ENCODE measurements at regions of chr11 and their contacts with region 1.

Region 1: GRCh38 chr11:10526974-10527918 is 13.7 kb downstream of the RNF141 start:
- DNase-seq: peak; percentile 66
- ATAC-seq: peak; percentile 59
- H3K4me3 ChIP-seq: no peak overlapping the region
- H3K27ac ChIP-seq: peak overlapping the region; percentile 89
- H3K4me1 ChIP-seq: peaks cover 16% of the 10 kb centered on the region
- H3K27me3 ChIP-seq: no peaks in the 10 kb centered on the region
- CTCF ChIP-seq: no peak
- POLR2A ChIP-seq: no peak
- RAD21 ChIP-seq: no peak

Region 2: GRCh38 chr11:10322830-10323792 is 204.1 kb before region 1 on chr11:
- CTCF ChIA-PET with region 1: no interaction called
- POLR2A ChIA-PET with region 1: no interaction called
- dilution Hi-C with region 1: no loop called
- in situ Hi-C with region 1: no loop called
- intact Hi-C with region 1: loop called (anchors 10 kb)
- DNase-seq: peak; percentile 93
- ATAC-seq: peak; percentile 50
- H3K4me3 ChIP-seq: no peak overlapping the region
- H3K27ac ChIP-seq: peak overlapping the region; percentile 48; the same call in 1 of the 2 replicates
- H3K4me1 ChIP-seq: peaks cover 38% of the 10 kb centered on the region
- H3K27me3 ChIP-seq: no peaks in the 10 kb centered on the region
- CTCF ChIP-seq: peak; percentile 68
- POLR2A ChIP-seq: no peak
- RAD21 ChIP-seq: peak; percentile 67

Region 3: DNA sequence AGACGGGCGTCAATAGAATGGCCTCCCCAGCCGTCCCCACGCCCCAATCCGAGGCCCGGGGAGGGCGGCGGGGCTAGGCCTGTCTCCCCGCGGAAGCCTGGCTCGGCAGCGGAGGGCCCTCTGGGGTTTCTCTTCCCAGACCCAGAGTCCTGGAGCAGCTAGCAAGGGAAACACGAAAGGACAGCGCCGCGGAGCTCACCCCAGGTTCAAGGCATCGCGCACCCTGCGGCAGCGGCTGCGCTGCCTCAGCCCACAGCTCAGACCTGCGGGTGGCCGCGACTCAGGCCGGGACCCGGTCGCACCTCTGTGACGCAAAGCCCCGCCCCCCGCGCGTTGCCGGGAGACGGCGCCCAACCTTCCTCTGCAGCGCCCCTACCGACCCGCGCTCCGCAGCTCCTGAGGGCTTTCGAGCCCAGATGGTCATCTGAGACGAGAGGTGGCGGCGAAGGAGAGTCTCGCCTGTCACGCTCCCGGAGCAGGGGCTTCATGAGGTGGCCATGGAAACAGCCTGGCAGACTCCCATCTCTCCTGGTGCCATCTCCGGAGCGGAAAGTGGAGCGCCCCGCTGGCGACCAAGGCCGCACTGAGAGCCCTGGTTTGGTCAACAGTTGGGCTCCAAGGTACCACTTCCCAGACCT is 13.8 kb after region 1 on chr11 and contains the start of gene RNF141:
- CTCF ChIA-PET with region 1: interaction called, 5 read pairs
- POLR2A ChIA-PET with region 1: no interaction called
- dilution Hi-C with region 1: no loop called
- in situ Hi-C with region 1: no loop called
- intact Hi-C with region 1: loop called (anchors 1 kb)
- DNase-seq: peak; percentile 87
- ATAC-seq: peak; percentile 99
- H3K4me3 ChIP-seq: peak within 1 kb of the TSS; percentile 77
- H3K27ac ChIP-seq: peak within 1 kb of the TSS; percentile 79
- H3K4me1 ChIP-seq: peaks cover 2% of the 10 kb centered on the region
- H3K27me3 ChIP-seq: no peaks in the 10 kb centered on the region
- CTCF ChIP-seq: peak; percentile 86
- POLR2A ChIP-seq: peak; percentile 92
- RAD21 ChIP-seq: peak; percentile 49
- total RNA-seq, gene RNF141: 18.6 and 34.2 TPM in 2 replicates

Region 4: GRCh38 chr11:10606536-10607208 is 79.4 kb after region 1 on chr11:
- CTCF ChIA-PET with region 1: no interaction called
- POLR2A ChIA-PET with region 1: no interaction called
- dilution Hi-C with region 1: no loop called
- in situ Hi-C with region 1: no loop called
- intact Hi-C with region 1: loop called (anchors 2 kb)
- DNase-seq: peak; percentile 86
- ATAC-seq: peak; percentile 59
- H3K4me3 ChIP-seq: no peak overlapping the region
- H3K27ac ChIP-seq: peak overlapping the region; percentile 93
- H3K4me1 ChIP-seq: peaks cover 29% of the 10 kb centered on the region
- H3K27me3 ChIP-seq: no peaks in the 10 kb centered on the region
- CTCF ChIP-seq: no peak
- POLR2A ChIP-seq: no peak
- RAD21 ChIP-seq: no peak

Region 5: DNA sequence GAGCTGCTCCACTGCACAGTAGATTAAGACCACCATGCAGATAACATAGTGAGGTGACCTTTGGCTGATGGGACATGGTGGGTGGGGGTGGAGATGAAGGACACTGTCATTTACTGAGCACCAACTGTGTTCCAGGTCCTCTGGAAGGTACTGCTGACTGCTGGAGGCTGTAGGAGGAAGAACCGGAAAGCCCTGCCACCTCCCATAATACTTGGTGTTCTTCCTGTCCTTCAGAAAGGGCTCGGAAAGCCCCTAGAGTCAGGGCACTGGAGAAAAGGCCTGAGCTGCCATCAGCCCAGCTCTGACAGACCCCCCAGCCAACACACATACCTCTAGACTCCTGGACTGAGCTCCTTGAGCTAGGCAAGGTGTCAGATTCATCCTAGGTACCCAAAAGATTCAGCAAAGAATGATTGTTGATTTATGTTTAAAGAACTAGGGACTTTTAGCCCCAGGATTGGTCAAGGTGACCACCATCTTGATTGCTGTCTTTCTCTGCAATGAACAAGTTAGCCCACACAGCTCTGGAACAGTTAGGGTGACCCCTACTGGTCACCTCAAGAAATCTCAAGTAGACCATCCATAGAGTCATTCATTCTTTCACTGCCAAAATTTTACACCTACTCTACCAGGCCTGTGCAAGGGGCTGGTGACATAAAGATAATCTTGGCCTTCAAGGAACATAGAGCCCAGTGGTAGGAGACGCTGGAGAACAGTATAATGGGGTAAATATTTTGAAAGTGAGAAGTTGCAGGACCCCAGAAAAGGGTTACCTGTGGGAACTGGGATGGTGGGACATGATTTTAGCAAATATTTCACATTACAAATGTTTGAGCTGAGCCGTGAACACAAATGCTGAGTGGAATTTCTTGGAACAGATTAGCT is 126.9 kb after region 1 on chr11:
- CTCF ChIA-PET with region 1: interaction called, 3 read pairs
- POLR2A ChIA-PET with region 1: no interaction called
- dilution Hi-C with region 1: no loop called
- in situ Hi-C with region 1: no loop called
- intact Hi-C with region 1: loop called (anchors 5 kb)
- DNase-seq: peak; percentile 67
- ATAC-seq: peak; percentile 28; the same call in 1 of the 2 replicates
- H3K4me3 ChIP-seq: no peak overlapping the region
- H3K27ac ChIP-seq: no peak overlapping the region
- H3K4me1 ChIP-seq: peaks cover 45% of the 10 kb centered on the region
- H3K27me3 ChIP-seq: no peaks in the 10 kb centered on the region
- CTCF ChIP-seq: peak; percentile 61
- POLR2A ChIP-seq: no peak
- RAD21 ChIP-seq: peak; percentile 77

Measured in IMR-90 (cell line).